ENCODE measurements at regions of chr11 and their contacts with region 1.

Region 1: DNA sequence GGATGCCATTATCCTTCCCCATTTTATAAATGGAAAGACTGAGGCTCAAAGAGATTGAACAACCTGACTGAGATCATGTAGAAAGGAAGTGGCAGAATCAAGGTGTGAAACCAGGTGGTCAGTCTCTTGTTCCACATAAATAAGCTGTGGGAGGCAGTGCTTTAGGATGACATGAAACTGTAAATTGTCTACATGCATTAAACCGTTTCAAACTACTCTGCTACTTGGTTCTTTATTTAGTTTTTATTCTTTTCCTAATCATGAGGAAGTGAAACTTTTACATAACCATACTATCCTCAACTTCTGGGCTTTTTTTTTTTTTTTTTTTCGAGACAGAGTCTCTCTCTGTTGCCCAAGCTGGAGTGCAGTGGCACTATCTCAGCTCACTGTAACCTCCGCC is 34.9 kb downstream of the CADM1 start:
- DNase-seq: no peak
- ATAC-seq: no peak
- H3K4me3 ChIP-seq: no peak overlapping the region
- H3K27ac ChIP-seq: no peak overlapping the region
- H3K4me1 ChIP-seq: no peaks in the 10 kb centered on the region
- H3K27me3 ChIP-seq: no peaks in the 10 kb centered on the region
- CTCF ChIP-seq: no peak
- POLR2A ChIP-seq: no peak
- RAD21 ChIP-seq: no peak

Region 2: GRCh38 chr11:115672999-115673411 is 203.6 kb after region 1 on chr11:
- CTCF ChIA-PET with region 1: no interaction called
- POLR2A ChIA-PET with region 1: interaction called, 12 read pairs
- dilution Hi-C with region 1: no loop called
- in situ Hi-C with region 1: no loop called
- intact Hi-C with region 1: no loop called
- DNase-seq: peak; percentile 73
- ATAC-seq: peak; percentile 34; the same call in 1 of the 2 replicates
- H3K4me3 ChIP-seq: no peak overlapping the region
- H3K27ac ChIP-seq: no peak overlapping the region
- H3K4me1 ChIP-seq: peaks cover 21% of the 10 kb centered on the region
- H3K27me3 ChIP-seq: no peaks in the 10 kb centered on the region
- CTCF ChIP-seq: no peak
- POLR2A ChIP-seq: no peak
- RAD21 ChIP-seq: no peak

Measured in IMR-90 (cell line).